CD8-positive, alpha-beta T cell (primary cell): ENCODE measurements at regions of chr1 and their contacts with region 1.

Region 1: DNA sequence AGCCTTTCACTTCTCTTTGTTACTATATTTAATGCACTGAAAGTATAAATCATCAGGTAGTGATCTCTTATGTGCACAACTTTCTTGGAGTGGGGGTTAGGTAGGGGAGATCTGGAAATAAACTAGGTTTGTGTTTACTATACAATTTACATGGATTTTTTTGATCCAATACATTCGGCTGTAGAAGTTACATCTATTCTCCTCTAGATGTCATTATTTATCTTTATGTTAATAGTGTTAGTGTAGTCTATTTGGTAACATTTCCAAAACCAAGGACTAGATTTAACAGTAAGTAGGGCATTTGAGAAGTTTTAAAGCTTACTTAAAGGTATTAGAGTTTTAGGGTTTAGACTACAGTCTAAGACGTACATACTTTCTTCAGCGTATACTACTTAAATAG is 5.4 kb downstream of the VPS45 start:
- DNase-seq: peak in 2 of 9 experiments; percentile 24 to 46
- ATAC-seq: peak; percentile 86
- H3K4me3 ChIP-seq: no peak overlapping the region
- H3K4me3 Mint-ChIP-seq: no peak overlapping the region
- H3K27ac ChIP-seq: no peak overlapping the region
- H3K27ac Mint-ChIP-seq: no peak overlapping the region
- H3K4me1 ChIP-seq: peaks cover 7% of the 10 kb centered on the region
- H3K4me1 Mint-ChIP-seq: peaks cover 25% of the 10 kb centered on the region
- H3K27me3 ChIP-seq: no peaks in the 10 kb centered on the region
- H3K27me3 Mint-ChIP-seq: no peaks in the 10 kb centered on the region
- CTCF ChIP-seq: peak; percentile 69

Region 2: GRCh38 chr1:150106341-150106740 is 33.4 kb after region 1 on chr1:
- CTCF ChIA-PET with region 1: interaction called, 7 read pairs
- POLR2A ChIA-PET with region 1: interaction called, 4 read pairs
- intact Hi-C with region 1: loop called in 1 of 2 experiments (anchors 5 kb)
- DNase-seq: peak in 6 of 9 experiments; percentile 2 to 69 (median 27)
- ATAC-seq: peak; percentile 71
- H3K4me3 ChIP-seq: no peak overlapping the region
- H3K4me3 Mint-ChIP-seq: peak overlapping the region; percentile 68
- H3K27ac ChIP-seq: peak overlapping the region in 1 of 2 experiments; percentile 65
- H3K27ac Mint-ChIP-seq: peak overlapping the region; percentile 95
- H3K4me1 ChIP-seq: peaks cover 58% of the 10 kb centered on the region
- H3K4me1 Mint-ChIP-seq: peaks cover 78% of the 10 kb centered on the region
- H3K27me3 ChIP-seq: no peaks in the 10 kb centered on the region
- H3K27me3 Mint-ChIP-seq: no peaks in the 10 kb centered on the region
- CTCF ChIP-seq: no peak

Region 3: GRCh38 chr1:150127868-150128267 is 54.9 kb after region 1 on chr1:
- CTCF ChIA-PET with region 1: interaction called, 10 read pairs
- POLR2A ChIA-PET with region 1: no interaction called
- intact Hi-C with region 1: no loop called
- DNase-seq: no peak
- ATAC-seq: no peak
- H3K4me3 ChIP-seq: no peak overlapping the region
- H3K4me3 Mint-ChIP-seq: no peak overlapping the region
- H3K27ac ChIP-seq: no peak overlapping the region
- H3K27ac Mint-ChIP-seq: no peak overlapping the region
- H3K4me1 ChIP-seq: no peaks in the 10 kb centered on the region
- H3K4me1 Mint-ChIP-seq: no peaks in the 10 kb centered on the region
- H3K27me3 ChIP-seq: no peaks in the 10 kb centered on the region
- H3K27me3 Mint-ChIP-seq: no peaks in the 10 kb centered on the region
- CTCF ChIP-seq: no peak

Region 4: DNA sequence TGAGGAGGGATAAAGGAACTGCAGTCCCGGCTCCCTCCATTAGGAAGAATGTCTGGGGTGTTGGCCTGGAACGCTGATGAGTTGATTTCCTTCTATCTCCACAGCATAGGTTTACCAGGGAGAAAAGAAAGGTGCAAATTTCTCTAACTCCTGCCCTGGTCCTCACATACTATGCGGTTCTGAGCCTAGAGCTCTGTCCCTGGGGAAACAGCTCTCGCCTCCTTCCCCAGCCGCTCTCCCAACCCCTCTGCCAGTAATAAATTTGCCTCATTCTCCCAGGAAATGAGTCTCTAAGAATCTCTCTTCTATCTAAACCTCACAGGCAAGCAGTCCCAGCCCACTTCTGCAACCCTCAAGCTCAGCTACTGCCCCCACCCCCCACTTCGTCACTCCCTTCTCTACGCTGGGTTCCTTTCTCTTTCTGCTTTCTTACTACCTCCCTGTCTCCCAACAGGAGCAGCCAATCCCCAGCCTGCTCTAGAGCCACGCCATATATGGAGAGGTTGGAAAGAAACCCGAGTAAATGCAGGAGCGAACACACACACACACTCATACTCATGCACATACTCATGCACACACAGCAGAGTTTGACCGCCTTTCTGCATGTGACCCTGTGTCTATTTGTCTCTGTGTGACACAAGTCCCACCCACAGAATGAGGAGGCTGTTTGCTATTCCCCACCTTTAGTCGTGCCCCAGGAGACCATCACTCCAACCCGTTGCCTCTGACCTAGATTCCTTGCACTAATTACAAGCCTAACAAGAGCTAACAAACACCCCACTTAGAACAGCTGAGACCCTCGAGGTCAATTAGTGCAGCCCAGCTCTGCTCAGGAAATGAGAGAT is 90.1 kb after region 1 on chr1:
- CTCF ChIA-PET with region 1: interaction called, 332 read pairs
- POLR2A ChIA-PET with region 1: interaction called, 5 read pairs
- intact Hi-C with region 1: loop called in 1 of 2 experiments (anchors 1 kb)
- DNase-seq: peak in 1 of 9 experiments; percentile 46
- ATAC-seq: peak; percentile 45
- H3K4me3 ChIP-seq: no peak overlapping the region
- H3K4me3 Mint-ChIP-seq: peak overlapping the region; percentile 6
- H3K27ac ChIP-seq: no peak overlapping the region
- H3K27ac Mint-ChIP-seq: peak overlapping the region; percentile 10
- H3K4me1 ChIP-seq: peaks cover 46% of the 10 kb centered on the region
- H3K4me1 Mint-ChIP-seq: peaks cover 43% of the 10 kb centered on the region
- H3K27me3 ChIP-seq: no peaks in the 10 kb centered on the region
- H3K27me3 Mint-ChIP-seq: no peaks in the 10 kb centered on the region
- CTCF ChIP-seq: no peak

Region 5: DNA sequence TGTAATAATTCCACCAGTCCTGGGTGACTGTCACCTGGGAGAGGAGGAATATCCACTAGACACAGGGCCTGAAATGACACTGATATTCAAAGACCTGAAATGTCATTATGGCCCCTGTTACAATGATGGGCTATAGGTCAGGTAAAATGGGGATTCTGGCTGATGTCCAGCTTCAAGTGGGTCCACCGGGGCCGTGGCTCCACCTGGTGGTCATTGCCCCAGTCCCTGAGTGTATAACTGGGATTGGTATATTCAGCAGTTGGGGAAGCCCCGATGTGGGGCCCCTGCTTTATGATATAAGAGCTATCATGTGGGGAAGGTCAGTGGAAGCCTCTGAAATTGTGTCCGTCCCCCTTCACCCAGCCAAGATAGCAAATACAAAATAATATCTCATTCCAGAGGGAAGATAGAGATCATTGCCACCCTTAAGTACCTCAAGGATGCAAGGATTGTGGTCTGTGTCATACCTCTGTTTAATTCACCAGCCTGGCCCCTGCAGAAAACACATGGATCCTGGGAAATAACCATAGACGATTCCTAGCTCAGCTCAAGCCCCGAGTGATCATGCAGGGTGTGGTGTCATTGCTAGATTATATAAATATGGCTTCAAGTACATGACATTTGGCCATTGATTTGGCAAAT is 96.1 kb after region 1 on chr1:
- CTCF ChIA-PET with region 1: interaction called, 332 read pairs
- POLR2A ChIA-PET with region 1: interaction called, 5 read pairs
- intact Hi-C with region 1: loop called (anchors 1 kb)
- DNase-seq: peak in 8 of 9 experiments; percentile 34 to 73 (median 58)
- ATAC-seq: peak; percentile 56
- H3K4me3 ChIP-seq: no peak overlapping the region
- H3K4me3 Mint-ChIP-seq: no peak overlapping the region
- H3K27ac ChIP-seq: no peak overlapping the region
- H3K27ac Mint-ChIP-seq: no peak overlapping the region
- H3K4me1 ChIP-seq: no peaks in the 10 kb centered on the region
- H3K4me1 Mint-ChIP-seq: no peaks in the 10 kb centered on the region
- H3K27me3 ChIP-seq: no peaks in the 10 kb centered on the region
- H3K27me3 Mint-ChIP-seq: no peaks in the 10 kb centered on the region
- CTCF ChIP-seq: peak; percentile 61

Region 6: DNA sequence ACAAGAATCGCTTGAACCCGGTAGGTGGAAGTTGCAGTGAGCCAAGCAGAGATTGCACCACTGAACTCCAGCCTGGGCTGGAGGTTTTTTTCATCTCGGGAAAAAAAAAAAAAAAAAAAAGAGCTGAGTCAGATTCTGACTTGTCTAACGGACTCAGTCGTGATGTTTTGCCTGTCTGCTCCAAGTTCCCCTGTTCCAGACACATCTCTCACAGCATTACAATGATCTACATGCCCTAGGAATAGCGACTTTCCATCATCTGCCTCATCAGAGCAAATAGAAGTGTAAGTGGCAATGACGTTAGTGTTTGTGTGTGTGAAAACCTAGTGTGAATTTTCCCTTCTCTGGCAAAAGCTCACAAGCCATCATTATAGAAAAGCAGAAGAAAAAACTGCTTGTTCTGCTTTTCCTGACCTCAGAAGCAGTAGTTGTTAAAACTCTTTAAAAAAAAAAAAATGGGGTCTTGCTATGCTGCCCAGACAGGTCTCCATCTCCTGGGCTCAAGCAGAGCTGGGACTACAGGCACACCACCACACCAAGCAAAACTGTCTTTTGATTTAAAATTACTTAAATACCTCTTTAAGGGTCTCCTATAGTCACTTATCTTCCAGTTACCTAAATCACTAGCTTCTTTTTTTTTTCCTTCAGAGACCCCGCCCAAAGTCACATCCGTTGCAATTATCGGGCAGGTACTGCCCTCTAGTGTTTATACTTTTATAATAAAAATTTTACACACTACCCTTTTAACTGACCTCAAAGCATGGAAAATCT is 114.0 kb after region 1 on chr1:
- CTCF ChIA-PET with region 1: interaction called, 78 read pairs
- POLR2A ChIA-PET with region 1: interaction called, 3 read pairs
- intact Hi-C with region 1: loop called (anchors 1 kb)
- DNase-seq: peak in 5 of 9 experiments; percentile 5 to 85 (median 12)
- ATAC-seq: peak; percentile 78
- H3K4me3 ChIP-seq: no peak overlapping the region
- H3K4me3 Mint-ChIP-seq: peak overlapping the region; percentile 32
- H3K27ac ChIP-seq: peak overlapping the region in 1 of 2 experiments; percentile 33
- H3K27ac Mint-ChIP-seq: no peak overlapping the region
- H3K4me1 ChIP-seq: peaks cover 5% of the 10 kb centered on the region
- H3K4me1 Mint-ChIP-seq: peaks cover 7% of the 10 kb centered on the region
- H3K27me3 ChIP-seq: no peaks in the 10 kb centered on the region
- H3K27me3 Mint-ChIP-seq: no peaks in the 10 kb centered on the region
- CTCF ChIP-seq: peak; percentile 91